ENCODE measurements at regions of chr5 and their contacts with region 1.

Region 1: GRCh38 chr5:90932052-90932699 is 373.6 kb downstream of the ADGRV1 start:
- DNase-seq: peak; percentile 47
- H3K4me3 ChIP-seq: no peak overlapping the region
- H3K27ac ChIP-seq: no peak overlapping the region
- H3K4me1 ChIP-seq: peaks cover 0 to 7% (median 2%) of the 10 kb centered on the region in 4 donors
- H3K27me3 ChIP-seq: no peaks in the 10 kb centered on the region
- CTCF ChIP-seq: peak; percentile 74 to 80 (median 78)
- EP300 ChIP-seq: no peak
- POLR2A ChIP-seq: no peak

Region 2: DNA sequence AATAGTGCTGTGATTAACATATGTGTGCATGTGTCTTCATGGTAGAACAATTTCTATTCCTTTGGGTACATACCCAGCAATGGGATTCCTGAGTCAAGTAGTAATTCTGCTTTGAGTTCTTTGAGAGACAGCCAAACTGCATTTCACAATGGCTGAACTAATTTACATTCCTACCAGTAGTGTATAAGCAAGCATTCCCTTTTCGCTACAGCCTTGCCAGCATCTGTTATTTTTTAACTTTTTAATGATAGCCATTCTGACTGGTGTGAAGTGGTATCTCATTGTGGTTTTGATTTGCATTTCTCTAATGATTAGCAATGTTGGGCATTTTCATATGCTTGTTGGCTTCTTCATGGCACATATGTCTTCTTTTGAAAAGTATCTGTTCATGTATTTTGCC is 142.4 kb after region 1 on chr5:
- in situ Hi-C with region 1: loop called in 1 of 4 experiments (anchors 25 kb)
- intact Hi-C with region 1: no loop called
- DNase-seq: no peak
- H3K4me3 ChIP-seq: no peak overlapping the region
- H3K27ac ChIP-seq: no peak overlapping the region
- H3K4me1 ChIP-seq: peaks cover 0 to 15% (median 0%) of the 10 kb centered on the region in 4 donors
- H3K27me3 ChIP-seq: no peaks in the 10 kb centered on the region
- CTCF ChIP-seq: peak in 4 of 5 experiments; percentile 17 to 42 (median 26)
- EP300 ChIP-seq: no peak
- POLR2A ChIP-seq: no peak

Region 3: GRCh38 chr5:91101600-91102379 is 169.6 kb after region 1 on chr5:
- in situ Hi-C with region 1: loop called (anchors 10 to 25 kb)
- intact Hi-C with region 1: no loop called
- DNase-seq: peak; percentile 75
- H3K4me3 ChIP-seq: no peak overlapping the region
- H3K27ac ChIP-seq: peak overlapping the region in 1 of 4 donors; percentile 20
- H3K4me1 ChIP-seq: peaks cover 0 to 28% (median 7%) of the 10 kb centered on the region in 4 donors
- H3K27me3 ChIP-seq: no peaks in the 10 kb centered on the region
- CTCF ChIP-seq: peak; percentile 73 to 92 (median 77)
- EP300 ChIP-seq: no peak
- POLR2A ChIP-seq: no peak

Region 4: DNA sequence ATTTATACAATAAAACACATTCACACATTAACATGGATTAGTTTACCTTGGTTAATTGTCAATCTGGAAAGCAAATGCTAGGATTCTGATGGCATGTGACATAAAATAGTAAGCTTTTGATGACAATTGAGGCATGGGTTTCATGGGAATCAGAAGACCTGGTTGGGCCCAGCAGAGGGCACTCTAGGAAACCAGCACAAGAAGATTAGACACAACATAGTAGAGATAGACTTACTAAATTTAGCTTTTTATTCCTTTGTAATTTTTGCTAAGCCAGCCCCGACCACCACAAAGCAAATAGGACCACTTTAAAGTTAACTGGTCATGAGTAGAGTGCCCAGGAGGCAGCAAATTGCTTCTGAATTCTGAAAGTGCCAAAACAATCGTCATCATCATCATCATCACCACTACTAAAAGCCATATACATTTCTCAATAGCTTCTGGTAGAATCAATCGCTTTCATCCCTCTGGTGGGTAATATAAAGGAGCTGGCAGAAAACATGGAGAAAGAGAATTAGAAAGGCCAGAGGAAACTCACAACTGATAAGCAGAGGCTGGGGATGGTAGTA is 287.7 kb after region 1 on chr5:
- in situ Hi-C with region 1: loop called in 1 of 4 experiments (anchors 25 kb)
- intact Hi-C with region 1: no loop called
- DNase-seq: no peak
- H3K4me3 ChIP-seq: no peak overlapping the region
- H3K27ac ChIP-seq: peak overlapping the region in 1 of 4 donors; percentile 44
- H3K4me1 ChIP-seq: peaks cover 0 to 14% (median 4%) of the 10 kb centered on the region in 4 donors
- H3K27me3 ChIP-seq: no peaks in the 10 kb centered on the region
- CTCF ChIP-seq: peak in 1 of 5 experiments; percentile 17
- EP300 ChIP-seq: no peak
- POLR2A ChIP-seq: no peak

Region 5: DNA sequence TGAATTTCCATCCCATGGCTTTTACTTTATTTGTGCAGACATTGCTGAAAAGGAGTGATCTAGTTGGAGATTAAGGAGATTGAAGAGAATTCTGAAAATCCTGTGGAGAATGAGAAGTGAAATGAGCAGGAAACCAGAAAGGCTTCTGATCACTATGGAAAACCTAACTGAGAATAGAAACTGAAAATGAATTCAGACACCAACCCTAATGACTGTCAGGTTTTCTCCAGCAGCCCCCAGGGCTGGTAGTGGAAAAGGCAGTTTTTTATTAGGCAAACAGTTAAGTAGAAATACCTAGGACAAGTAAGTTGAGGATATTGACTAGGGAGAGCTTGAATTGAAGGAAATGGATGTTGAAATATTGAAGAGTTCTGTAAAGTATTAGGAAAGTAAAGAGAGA is 465.6 kb after region 1 on chr5:
- in situ Hi-C with region 1: loop called in 1 of 4 experiments (anchors 10 kb)
- intact Hi-C with region 1: no loop called
- DNase-seq: no peak
- H3K4me3 ChIP-seq: no peak overlapping the region
- H3K27ac ChIP-seq: no peak overlapping the region
- H3K4me1 ChIP-seq: no peaks in the 10 kb centered on the region
- H3K27me3 ChIP-seq: no peaks in the 10 kb centered on the region
- CTCF ChIP-seq: no peak
- EP300 ChIP-seq: no peak
- POLR2A ChIP-seq: no peak

Measured in transverse colon (tissue), 4 donors.